ENCODE measurements at regions of chr7 and their contacts with region 1.

Region 1: GRCh38 chr7:155497149-155497901 is 39.4 kb downstream of the EN2 start:
- DNase-seq: no peak
- ATAC-seq: peak; percentile 36; the same call in 1 of the 2 replicates
- H3K4me3 ChIP-seq: no peak overlapping the region
- H3K27ac ChIP-seq: no peak overlapping the region
- H3K4me1 ChIP-seq: no peaks in the 10 kb centered on the region
- H3K27me3 ChIP-seq: peaks cover 37% of the 10 kb centered on the region
- CTCF ChIP-seq: no peak
- POLR2A ChIP-seq: no peak
- RAD21 ChIP-seq: no peak

Region 2: DNA sequence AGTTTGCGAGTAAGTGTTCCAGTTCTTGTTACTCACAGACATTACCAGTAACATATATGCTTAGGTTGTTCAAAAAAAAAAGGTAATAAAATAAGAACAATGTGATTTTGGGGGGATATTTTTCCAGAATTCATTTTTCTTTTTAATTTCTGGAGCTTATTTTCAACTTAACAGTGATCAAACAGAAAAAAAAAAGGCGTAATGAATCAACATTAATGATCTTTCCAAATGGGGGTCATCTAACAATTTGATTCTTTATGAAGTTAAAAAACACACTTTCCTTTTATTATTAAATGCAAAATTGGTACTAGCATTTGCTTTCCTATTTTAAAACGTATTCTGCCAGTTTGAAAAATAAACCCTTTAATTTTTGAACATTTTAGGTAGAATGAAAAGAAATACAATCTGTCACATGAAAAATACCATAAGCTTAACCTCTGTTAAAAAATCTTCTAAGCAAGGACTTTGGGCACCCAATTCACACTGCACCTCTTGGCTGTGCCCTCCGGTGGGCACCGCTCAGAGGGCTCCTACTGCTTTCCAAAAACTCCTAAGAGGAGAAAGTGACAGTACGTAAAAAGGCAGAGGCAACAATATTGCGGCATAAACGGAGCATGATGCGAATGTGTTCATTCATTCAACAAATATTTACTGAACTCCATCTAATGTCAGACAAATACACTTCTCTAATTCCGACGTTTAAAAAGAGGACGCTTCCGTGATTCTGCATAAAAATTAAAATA is 16.4 kb after region 1 on chr7:
- CTCF ChIA-PET with region 1: no interaction called
- POLR2A ChIA-PET with region 1: no interaction called
- RAD21 ChIA-PET with region 1: no interaction called
- intact Hi-C with region 1: loop called (anchors 1 kb)
- DNase-seq: no peak
- ATAC-seq: no peak
- H3K4me3 ChIP-seq: no peak overlapping the region
- H3K27ac ChIP-seq: no peak overlapping the region
- H3K4me1 ChIP-seq: no peaks in the 10 kb centered on the region
- H3K27me3 ChIP-seq: peaks cover 50% of the 10 kb centered on the region
- CTCF ChIP-seq: no peak
- POLR2A ChIP-seq: no peak
- RAD21 ChIP-seq: no peak